IMR-90 (cell line): ENCODE measurements at regions of chr12 and their contacts with region 1.

Region 1: GRCh38 chr12:50283229-50283923 is at the start of gene LIMA1:
- DNase-seq: peak; percentile 75
- ATAC-seq: peak; percentile 96
- H3K4me3 ChIP-seq: peak within 1 kb of the TSS; percentile 74
- H3K27ac ChIP-seq: peak within 1 kb of the TSS; percentile 92
- H3K4me1 ChIP-seq: peaks cover 2% of the 10 kb centered on the region; the same call in 1 of the 2 replicates
- H3K27me3 ChIP-seq: no peaks in the 10 kb centered on the region
- CTCF ChIP-seq: no peak
- POLR2A ChIP-seq: 0 out of 2 replicates have a peak, but pooled peaks have one; percentile 30
- RAD21 ChIP-seq: no peak
- total RNA-seq, gene LIMA1: 163 and 183 TPM in 2 replicates

Region 2: GRCh38 chr12:48995061-48995879 is 1288.1 kb before region 1 on chr12:
- CTCF ChIA-PET with region 1: no interaction called
- POLR2A ChIA-PET with region 1: no interaction called
- dilution Hi-C with region 1: no loop called
- in situ Hi-C with region 1: no loop called
- intact Hi-C with region 1: no loop called
- DNase-seq: peak; percentile 73
- ATAC-seq: peak; percentile 77
- H3K4me3 ChIP-seq: no peak overlapping the region
- H3K27ac ChIP-seq: no peak overlapping the region
- H3K4me1 ChIP-seq: peaks cover 12% of the 10 kb centered on the region
- H3K27me3 ChIP-seq: peaks cover 44% of the 10 kb centered on the region
- CTCF ChIP-seq: peak; percentile 85
- POLR2A ChIP-seq: no peak
- RAD21 ChIP-seq: peak; percentile 84

Region 3: GRCh38 chr12:50246873-50247612 is 36.3 kb before region 1 on chr12:
- CTCF ChIA-PET with region 1: no interaction called
- POLR2A ChIA-PET with region 1: no interaction called
- dilution Hi-C with region 1: no loop called
- in situ Hi-C with region 1: no loop called
- intact Hi-C with region 1: loop called (anchors 1 kb)
- DNase-seq: peak; percentile 99
- ATAC-seq: peak; percentile 74
- H3K4me3 ChIP-seq: no peak overlapping the region
- H3K27ac ChIP-seq: peak overlapping the region; percentile 83
- H3K4me1 ChIP-seq: peaks cover 21% of the 10 kb centered on the region
- H3K27me3 ChIP-seq: no peaks in the 10 kb centered on the region
- CTCF ChIP-seq: no peak
- POLR2A ChIP-seq: no peak
- RAD21 ChIP-seq: no peak

Region 4: GRCh38 chr12:50265770-50266524 is 17.4 kb before region 1 on chr12:
- CTCF ChIA-PET with region 1: no interaction called
- POLR2A ChIA-PET with region 1: no interaction called
- dilution Hi-C with region 1: no loop called
- in situ Hi-C with region 1: no loop called
- intact Hi-C with region 1: loop called (anchors 2 kb)
- DNase-seq: no peak
- ATAC-seq: no peak
- H3K4me3 ChIP-seq: no peak overlapping the region
- H3K27ac ChIP-seq: no peak overlapping the region
- H3K4me1 ChIP-seq: peaks cover 2% of the 10 kb centered on the region; the same call in 1 of the 2 replicates
- H3K27me3 ChIP-seq: no peaks in the 10 kb centered on the region
- CTCF ChIP-seq: no peak
- POLR2A ChIP-seq: no peak
- RAD21 ChIP-seq: no peak